Dorsolateral prefrontal cortex (tissue), 120 donors: ENCODE measurements at regions of chr6 and their contacts with region 1.

Region 1: GRCh38 chr6:36204068-36204753 is 7.7 kb downstream of the BRPF3 start:
- DNase-seq: no peak
- H3K4me3 ChIP-seq: no peak overlapping the region
- H3K27ac ChIP-seq: no peak overlapping the region
- H3K27me3 ChIP-seq: no peaks in the 10 kb centered on the region
- CTCF ChIP-seq: no peak

Region 2: DNA sequence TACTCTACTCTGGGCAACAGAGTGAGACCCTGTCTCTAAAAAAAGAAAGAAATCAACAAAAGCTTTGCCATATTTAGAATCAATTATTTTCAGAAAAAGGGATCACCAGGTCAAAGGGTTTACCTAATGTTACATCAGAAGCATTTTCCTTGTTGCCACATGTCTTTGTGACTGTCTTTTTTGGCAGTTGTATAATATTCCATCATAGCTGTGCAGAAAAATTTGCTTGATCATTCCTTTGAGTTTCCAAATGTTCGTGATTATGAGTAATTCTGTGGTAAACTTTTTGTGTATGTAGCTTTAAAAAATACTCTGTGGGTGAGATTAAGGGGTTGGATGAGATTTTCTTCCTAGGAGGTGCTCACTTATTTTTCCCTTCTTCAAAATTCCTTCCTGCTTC is 92.0 kb after region 1 on chr6:
- intact Hi-C with region 1: loop called in 1 of 2 experiments (anchors 5 kb)
- DNase-seq: no peak
- H3K4me3 ChIP-seq: no peak overlapping the region
- H3K27ac ChIP-seq: peak overlapping the region in 19 of 59 donors; percentile 7 to 77 (median 59)
- H3K27me3 ChIP-seq: no peaks in the 10 kb centered on the region
- CTCF ChIP-seq: no peak